Activated CD4-positive, alpha-beta T cell treated with anti-CD3 and anti-CD28 coated beads for 36 hours (primary cell): ENCODE measurements at regions of chr5 and their contacts with region 1.

Region 1: GRCh38 chr5:69189162-69190086 is at the start of gene CENPH:
- DNase-seq: peak; percentile 95
- ATAC-seq: peak; percentile 90
- H3K4me3 Mint-ChIP-seq: peak within 1 kb of the TSS; percentile 96
- H3K27ac Mint-ChIP-seq: peak within 1 kb of the TSS; percentile 99
- H3K4me1 Mint-ChIP-seq: peaks cover 8% of the 10 kb centered on the region
- H3K27me3 Mint-ChIP-seq: no peaks in the 10 kb centered on the region
- total RNA-seq, gene CENPH: 96.0 to 98.3 TPM

Region 2: DNA sequence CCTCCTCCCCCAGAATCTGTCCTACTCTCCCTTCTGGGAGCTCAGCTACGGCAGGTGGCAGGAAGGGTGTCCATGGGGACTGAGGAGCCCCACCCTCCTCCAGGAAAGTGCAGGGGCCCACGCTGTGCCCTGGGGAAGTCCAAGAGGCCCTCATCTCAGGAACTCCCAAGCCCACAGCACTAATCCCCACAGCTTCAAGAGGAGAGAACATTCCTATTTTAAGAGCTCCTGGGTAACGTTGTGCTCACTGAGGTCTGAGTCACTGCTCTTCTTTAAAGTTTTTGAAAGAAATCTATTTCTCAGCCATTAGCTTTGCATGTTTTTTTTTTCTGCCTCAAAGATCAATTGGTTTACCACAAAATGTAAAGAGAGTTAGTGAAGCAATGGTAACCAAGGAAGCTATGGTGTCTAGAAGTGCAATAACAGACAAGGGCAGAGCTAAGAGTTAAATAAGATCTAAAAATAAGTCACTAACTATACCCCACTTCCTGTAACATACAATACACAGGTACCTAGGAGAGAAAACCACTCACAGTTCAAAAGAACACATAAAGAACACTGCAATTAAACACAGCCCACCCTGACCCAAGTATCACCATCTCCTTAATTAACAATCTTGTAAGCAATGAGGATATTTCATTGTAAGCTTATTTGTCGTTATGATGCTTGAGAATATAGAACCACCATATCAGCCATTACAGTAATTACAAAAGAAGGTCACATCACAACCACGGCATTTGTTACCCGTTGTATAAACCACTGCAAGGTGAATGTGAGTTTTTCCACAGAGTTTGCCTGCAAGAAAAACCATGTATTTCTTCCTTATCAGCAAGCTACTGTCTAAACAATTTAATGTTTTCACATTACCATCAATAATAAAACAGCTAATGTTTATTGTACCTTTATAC is 477.9 kb before region 1 on chr5:
- CTCF ChIA-PET with region 1: no interaction called
- POLR2A ChIA-PET with region 1: no interaction called
- intact Hi-C with region 1: no loop called
- DNase-seq: no peak
- ATAC-seq: peak; percentile 81
- H3K4me3 Mint-ChIP-seq: no peak overlapping the region
- H3K27ac Mint-ChIP-seq: peak overlapping the region; percentile 62
- H3K4me1 Mint-ChIP-seq: peaks cover 28% of the 10 kb centered on the region
- H3K27me3 Mint-ChIP-seq: peaks cover under 1% of the 10 kb centered on the region

Region 3: GRCh38 chr5:69083412-69083811 is 106.0 kb before region 1 on chr5:
- CTCF ChIA-PET with region 1: no interaction called
- POLR2A ChIA-PET with region 1: no interaction called
- intact Hi-C with region 1: no loop called
- DNase-seq: no peak
- ATAC-seq: no peak
- H3K4me3 Mint-ChIP-seq: no peak overlapping the region
- H3K27ac Mint-ChIP-seq: no peak overlapping the region
- H3K4me1 Mint-ChIP-seq: peaks cover 16% of the 10 kb centered on the region
- H3K27me3 Mint-ChIP-seq: no peaks in the 10 kb centered on the region

Region 4: DNA sequence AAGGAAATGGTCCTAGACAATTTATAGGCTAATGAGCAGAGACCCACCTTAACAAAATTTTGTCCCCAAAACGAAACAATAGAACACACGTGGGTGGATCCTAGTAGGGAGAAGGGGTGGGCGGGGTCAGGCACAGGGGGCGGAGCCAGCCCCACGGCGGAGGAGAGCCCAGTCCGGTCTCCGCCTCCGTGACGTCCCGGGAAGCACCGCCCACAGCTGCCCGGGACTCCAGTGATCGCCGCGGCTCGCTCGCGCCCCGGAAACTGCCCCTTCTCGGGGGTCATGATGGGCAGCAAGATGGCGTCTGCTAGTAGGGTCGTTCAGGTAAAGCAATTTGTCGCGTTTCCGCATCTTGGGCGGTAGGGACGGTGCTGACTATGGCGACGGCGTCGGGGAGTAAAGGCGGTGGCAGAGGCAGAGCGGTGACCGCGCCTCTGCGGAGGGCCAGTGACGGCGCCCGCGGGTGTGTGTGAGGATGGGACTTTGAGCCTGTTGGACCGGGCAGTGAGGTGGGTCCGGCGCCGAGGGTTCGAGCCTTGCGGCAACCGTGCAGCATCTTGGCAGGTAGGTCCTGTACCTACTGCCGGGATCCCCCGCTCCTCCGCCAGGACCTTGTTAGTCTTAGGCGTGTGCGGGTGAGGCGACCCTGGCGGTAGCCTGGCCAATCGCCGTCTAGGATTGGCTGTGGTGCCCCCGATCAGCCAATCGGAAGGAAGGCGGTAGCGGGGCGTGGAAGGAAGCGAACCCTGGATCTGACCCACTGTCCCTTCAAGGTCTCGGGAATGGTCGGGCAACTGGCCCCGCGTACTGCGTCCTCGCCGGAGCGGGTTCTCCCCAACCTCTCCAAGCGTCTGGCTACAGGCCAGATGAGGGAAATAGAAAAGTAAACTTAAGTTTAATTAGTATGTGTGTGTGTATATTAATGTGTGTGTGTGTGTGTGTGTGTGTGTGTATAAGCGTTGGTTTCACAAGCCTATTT is 28.4 kb after region 1 on chr5:
- CTCF ChIA-PET with region 1: interaction called, 4 read pairs
- POLR2A ChIA-PET with region 1: interaction called, 5 read pairs
- intact Hi-C with region 1: loop called (anchors 1 kb)
- DNase-seq: peak; percentile 97
- ATAC-seq: peak; percentile 93
- H3K4me3 Mint-ChIP-seq: peak overlapping the region; percentile 91
- H3K27ac Mint-ChIP-seq: peak overlapping the region; percentile 95
- H3K4me1 Mint-ChIP-seq: peaks cover 18% of the 10 kb centered on the region
- H3K27me3 Mint-ChIP-seq: no peaks in the 10 kb centered on the region

Region 5: DNA sequence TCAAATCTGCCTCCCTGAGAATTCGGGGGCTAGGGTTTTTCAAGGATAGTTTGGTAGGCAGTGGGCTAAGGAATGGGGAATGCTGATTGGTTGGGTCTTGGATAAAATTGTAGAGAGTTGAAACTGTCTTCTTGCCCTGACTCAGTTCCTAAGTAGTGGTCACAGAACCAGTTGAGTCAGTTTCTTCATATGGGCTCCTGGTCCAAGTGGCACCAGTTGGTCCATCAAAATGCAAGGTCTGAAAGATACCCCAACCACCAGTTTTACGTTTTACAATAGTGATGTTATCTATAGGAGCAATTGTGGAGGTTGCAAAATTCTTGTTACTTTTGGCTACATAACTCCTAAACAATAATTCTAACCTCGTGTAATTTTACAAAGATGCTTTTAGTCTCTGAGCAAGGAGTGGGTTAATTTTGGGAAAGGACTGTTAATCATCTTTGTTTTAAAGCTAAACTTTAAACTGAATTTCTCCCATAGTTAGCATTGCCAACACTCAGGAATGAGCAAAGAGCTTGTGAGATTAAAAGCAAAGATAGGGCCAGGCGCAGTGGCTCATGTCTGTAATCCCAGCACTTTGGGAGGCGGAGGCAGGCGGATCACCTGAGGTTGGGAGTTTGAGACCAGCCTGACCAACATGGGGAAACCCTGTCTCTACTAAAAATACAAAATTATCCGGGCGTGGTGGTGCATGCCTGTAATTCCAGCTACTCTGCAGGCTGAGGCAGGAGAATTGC is 53.0 kb after region 1 on chr5:
- CTCF ChIA-PET with region 1: no interaction called
- POLR2A ChIA-PET with region 1: no interaction called
- intact Hi-C with region 1: no loop called
- DNase-seq: no peak
- ATAC-seq: no peak
- H3K4me3 Mint-ChIP-seq: no peak overlapping the region
- H3K27ac Mint-ChIP-seq: no peak overlapping the region
- H3K4me1 Mint-ChIP-seq: peaks cover 47% of the 10 kb centered on the region
- H3K27me3 Mint-ChIP-seq: no peaks in the 10 kb centered on the region

Region 6: GRCh38 chr5:69271376-69271775 is 82.0 kb after region 1 on chr5:
- CTCF ChIA-PET with region 1: no interaction called
- POLR2A ChIA-PET with region 1: no interaction called
- intact Hi-C with region 1: no loop called
- DNase-seq: no peak
- ATAC-seq: no peak
- H3K4me3 Mint-ChIP-seq: no peak overlapping the region
- H3K27ac Mint-ChIP-seq: peak overlapping the region; percentile 0
- H3K4me1 Mint-ChIP-seq: peaks cover 5% of the 10 kb centered on the region
- H3K27me3 Mint-ChIP-seq: no peaks in the 10 kb centered on the region